Psoas muscle (tissue), 8 donors: ENCODE measurements at regions of chrX and their contacts with region 1.

Region 1: GRCh38 chrX:130704053-130705038 is 198.7 kb downstream of the ENOX2 start:
- DNase-seq: no peak
- ATAC-seq: peak in 3 of 4 donors; percentile 21 to 56 (median 49)
- H3K4me3 ChIP-seq: no peak overlapping the region
- H3K27ac ChIP-seq: peak overlapping the region; percentile 71
- H3K4me1 ChIP-seq: peaks cover 19% of the 10 kb centered on the region
- H3K27me3 ChIP-seq: no peaks in the 10 kb centered on the region
- CTCF ChIP-seq: no peak

Region 2: GRCh38 chrX:130304587-130305368 is 399.6 kb before region 1 on chrX:
- intact Hi-C with region 1: no loop called
- DNase-seq: no peak
- ATAC-seq: peak in 1 of 4 donors; percentile 55
- H3K4me3 ChIP-seq: no peak overlapping the region
- H3K27ac ChIP-seq: no peak overlapping the region
- H3K4me1 ChIP-seq: no peaks in the 10 kb centered on the region
- H3K27me3 ChIP-seq: no peaks in the 10 kb centered on the region
- CTCF ChIP-seq: no peak

Region 3: GRCh38 chrX:130887376-130887775 is 183.0 kb after region 1 on chrX:
- intact Hi-C with region 1: loop called in 1 of 2 experiments (anchors 10 kb)
- DNase-seq: no peak
- ATAC-seq: peak in 2 of 4 donors; percentile 50 to 67
- H3K4me3 ChIP-seq: no peak overlapping the region
- H3K27ac ChIP-seq: no peak overlapping the region
- H3K4me1 ChIP-seq: no peaks in the 10 kb centered on the region
- H3K27me3 ChIP-seq: no peaks in the 10 kb centered on the region
- CTCF ChIP-seq: no peak